Activated naive CD4-positive, alpha-beta T cell treated with anti-CD3 and anti-CD28 coated beads for 36 hours (primary cell): ENCODE measurements at regions of chr3 and their contacts with region 1.

Region 1: DNA sequence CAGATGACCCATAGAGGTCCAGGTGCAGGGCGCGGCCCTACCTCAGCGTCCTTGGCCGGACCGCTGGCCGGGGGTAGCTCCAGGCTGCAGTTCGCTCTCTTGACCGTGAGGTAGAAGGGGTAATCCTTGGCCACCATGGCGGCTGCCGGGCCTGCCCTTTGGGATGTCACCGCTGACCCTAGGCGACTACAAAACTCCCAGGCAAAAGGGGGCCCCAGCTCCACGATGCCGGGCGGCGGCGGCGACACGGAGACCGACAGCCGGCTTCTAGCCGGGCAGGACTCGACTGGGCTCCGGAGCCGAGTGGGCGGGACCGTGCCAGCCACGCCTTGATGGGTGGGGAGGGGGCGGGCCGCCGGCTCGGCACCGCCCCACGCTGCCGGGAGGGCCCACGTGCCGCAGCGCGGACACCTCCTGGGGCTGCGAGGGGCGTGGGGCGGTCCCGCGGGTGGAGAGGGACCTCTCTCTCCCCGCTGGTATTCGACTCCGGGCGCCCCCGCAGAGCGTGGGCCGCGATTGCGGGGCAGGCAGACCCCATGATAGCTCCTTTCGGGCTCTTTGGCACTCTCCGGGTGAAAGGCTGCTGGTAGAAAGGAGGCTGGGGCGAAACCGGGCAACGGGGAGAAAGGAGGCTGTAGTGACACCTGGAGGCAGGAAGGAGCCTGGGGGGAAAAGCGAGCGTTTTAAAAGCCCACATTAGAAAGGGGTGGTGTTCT is at the start of gene ARHGEF3:
- DNase-seq: peak; percentile 89
- H3K4me3 Mint-ChIP-seq: peak within 1 kb of the TSS; percentile 95
- H3K27ac Mint-ChIP-seq: peak within 1 kb of the TSS; percentile 89
- H3K4me1 Mint-ChIP-seq: peaks cover 38% of the 10 kb centered on the region
- H3K27me3 Mint-ChIP-seq: no peaks in the 10 kb centered on the region
- total RNA-seq, gene ARHGEF3: 36.4 to 37.7 TPM

Region 2: DNA sequence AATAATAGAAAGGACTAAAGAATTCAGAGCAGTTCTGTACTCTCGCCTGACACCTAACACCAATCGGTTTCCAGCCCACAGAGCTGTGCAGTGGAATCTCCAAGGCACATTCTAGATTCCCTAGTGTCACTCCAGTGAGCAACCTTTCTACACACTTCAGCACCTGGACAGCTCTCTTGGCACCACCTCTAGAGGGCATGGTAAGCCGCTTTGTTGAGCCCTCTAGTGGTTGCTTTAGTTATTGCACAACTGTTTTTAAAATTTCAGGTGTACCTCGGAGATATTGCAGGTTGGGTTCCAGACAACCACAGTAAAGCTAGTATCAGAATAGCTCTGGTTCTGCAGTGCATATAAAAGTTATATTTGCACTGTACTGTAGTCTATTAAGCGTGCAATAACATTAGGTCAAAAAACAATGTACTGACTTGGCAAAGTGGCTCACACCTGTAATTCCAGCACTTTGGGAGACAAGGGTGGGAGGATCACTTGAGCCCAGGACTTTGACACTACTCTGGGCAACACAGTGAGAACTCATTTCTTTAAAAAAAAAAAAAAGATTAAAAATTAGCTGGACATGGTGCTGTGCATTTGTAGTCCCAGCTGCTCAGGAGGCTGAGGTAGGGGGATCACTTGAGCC is 307.0 kb before region 1 on chr3:
- CTCF ChIA-PET with region 1: no interaction called
- intact Hi-C with region 1: loop called (anchors 5 kb)
- DNase-seq: peak; percentile 86
- H3K4me3 Mint-ChIP-seq: no peak overlapping the region
- H3K27ac Mint-ChIP-seq: no peak overlapping the region
- H3K4me1 Mint-ChIP-seq: no peaks in the 10 kb centered on the region
- H3K27me3 Mint-ChIP-seq: peaks cover 11% of the 10 kb centered on the region

Region 3: GRCh38 chr3:56702490-56703315 is 99.1 kb before region 1 on chr3:
- CTCF ChIA-PET with region 1: interaction called, 204 read pairs
- intact Hi-C with region 1: loop called (anchors 1 kb)
- DNase-seq: peak; percentile 70
- H3K4me3 Mint-ChIP-seq: no peak overlapping the region
- H3K27ac Mint-ChIP-seq: no peak overlapping the region
- H3K4me1 Mint-ChIP-seq: peaks cover 17% of the 10 kb centered on the region
- H3K27me3 Mint-ChIP-seq: no peaks in the 10 kb centered on the region

Region 4: DNA sequence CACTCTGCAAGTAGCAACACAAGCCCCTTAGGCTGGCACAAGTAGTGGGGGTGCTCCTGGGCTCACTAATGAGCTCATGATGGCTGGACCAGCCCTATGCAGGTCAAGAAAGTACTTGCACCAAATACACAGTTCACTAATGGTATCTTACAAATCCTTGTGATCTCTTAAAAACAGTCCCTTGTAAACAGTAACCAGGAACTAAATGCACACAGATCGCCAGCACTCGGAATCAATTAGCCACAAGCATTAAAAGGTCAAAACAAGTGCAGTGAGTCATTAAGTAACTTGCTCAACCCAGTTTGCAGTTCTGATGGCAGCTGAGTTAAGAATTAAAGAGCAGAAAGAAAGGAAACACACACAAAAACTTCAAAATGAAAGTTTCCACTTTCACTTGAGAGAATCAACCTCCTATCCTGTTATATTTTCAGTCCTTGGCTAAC is 43.3 kb before region 1 on chr3:
- CTCF ChIA-PET with region 1: interaction called, 83 read pairs
- intact Hi-C with region 1: loop called (anchors 1 kb)
- DNase-seq: peak; percentile 65
- H3K4me3 Mint-ChIP-seq: peak overlapping the region; percentile 55
- H3K27ac Mint-ChIP-seq: peak overlapping the region; percentile 85
- H3K4me1 Mint-ChIP-seq: peaks cover 82% of the 10 kb centered on the region
- H3K27me3 Mint-ChIP-seq: no peaks in the 10 kb centered on the region

Region 5: GRCh38 chr3:56825567-56826438 is 24.0 kb after region 1 on chr3:
- CTCF ChIA-PET with region 1: interaction called, 14 read pairs
- intact Hi-C with region 1: no loop called
- DNase-seq: no peak
- H3K4me3 Mint-ChIP-seq: no peak overlapping the region
- H3K27ac Mint-ChIP-seq: no peak overlapping the region
- H3K4me1 Mint-ChIP-seq: peaks cover 45% of the 10 kb centered on the region
- H3K27me3 Mint-ChIP-seq: no peaks in the 10 kb centered on the region

Region 6: DNA sequence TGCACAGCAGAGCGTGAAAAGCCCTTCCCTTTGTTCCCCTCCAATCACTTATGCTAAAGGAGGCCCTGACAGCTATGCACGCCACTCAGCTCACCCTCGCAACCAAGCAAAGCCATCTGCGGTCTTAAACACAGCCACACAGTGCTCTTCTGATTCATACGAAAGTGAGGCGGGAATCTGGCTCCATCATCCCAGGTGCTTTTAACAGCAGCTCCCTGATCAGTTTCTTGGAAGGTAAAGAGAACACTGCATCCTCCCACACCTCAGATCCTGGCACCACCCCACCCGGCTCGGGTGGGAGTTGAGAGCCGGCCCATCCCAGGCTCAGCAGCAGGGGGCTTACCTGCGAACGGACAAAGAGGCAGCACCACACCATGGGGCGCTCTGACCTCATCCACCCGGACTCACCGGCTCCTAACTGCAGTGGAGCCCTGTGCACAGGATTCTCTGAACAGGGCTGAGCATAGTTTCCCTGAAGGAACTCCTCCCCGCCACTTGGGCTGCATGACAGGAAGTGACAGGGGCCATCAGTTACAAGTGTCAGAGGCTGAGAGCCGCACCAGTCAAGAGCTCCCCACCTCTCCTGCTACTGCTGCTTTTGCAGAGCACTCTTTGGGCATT is 114.3 kb after region 1 on chr3:
- CTCF ChIA-PET with region 1: interaction called, 43 read pairs
- intact Hi-C with region 1: loop called (anchors 1 kb)
- DNase-seq: peak; percentile 86
- H3K4me3 Mint-ChIP-seq: peak overlapping the region; percentile 86
- H3K27ac Mint-ChIP-seq: peak overlapping the region; percentile 92
- H3K4me1 Mint-ChIP-seq: peaks cover 72% of the 10 kb centered on the region
- H3K27me3 Mint-ChIP-seq: no peaks in the 10 kb centered on the region